Activated CD4-positive, alpha-beta T cell treated with anti-CD3 and anti-CD28 coated beads, Interleukin-2, amount 10 ng/mL, durations not matched to agents 24 days and 14 days (primary cell): ENCODE measurements at regions of chr1 and their contacts with region 1.

Region 1: GRCh38 chr1:112619520-112620376 is at the start of gene CAPZA1:
- DNase-seq: peak; percentile 97
- H3K4me3 Mint-ChIP-seq: peak within 1 kb of the TSS; percentile 99
- H3K27ac Mint-ChIP-seq: peak within 1 kb of the TSS; percentile 100
- H3K4me1 Mint-ChIP-seq: peaks cover 38% of the 10 kb centered on the region
- H3K27me3 Mint-ChIP-seq: no peaks in the 10 kb centered on the region
- total RNA-seq, gene CAPZA1: 241 and 250 TPM in 2 replicates

Region 2: DNA sequence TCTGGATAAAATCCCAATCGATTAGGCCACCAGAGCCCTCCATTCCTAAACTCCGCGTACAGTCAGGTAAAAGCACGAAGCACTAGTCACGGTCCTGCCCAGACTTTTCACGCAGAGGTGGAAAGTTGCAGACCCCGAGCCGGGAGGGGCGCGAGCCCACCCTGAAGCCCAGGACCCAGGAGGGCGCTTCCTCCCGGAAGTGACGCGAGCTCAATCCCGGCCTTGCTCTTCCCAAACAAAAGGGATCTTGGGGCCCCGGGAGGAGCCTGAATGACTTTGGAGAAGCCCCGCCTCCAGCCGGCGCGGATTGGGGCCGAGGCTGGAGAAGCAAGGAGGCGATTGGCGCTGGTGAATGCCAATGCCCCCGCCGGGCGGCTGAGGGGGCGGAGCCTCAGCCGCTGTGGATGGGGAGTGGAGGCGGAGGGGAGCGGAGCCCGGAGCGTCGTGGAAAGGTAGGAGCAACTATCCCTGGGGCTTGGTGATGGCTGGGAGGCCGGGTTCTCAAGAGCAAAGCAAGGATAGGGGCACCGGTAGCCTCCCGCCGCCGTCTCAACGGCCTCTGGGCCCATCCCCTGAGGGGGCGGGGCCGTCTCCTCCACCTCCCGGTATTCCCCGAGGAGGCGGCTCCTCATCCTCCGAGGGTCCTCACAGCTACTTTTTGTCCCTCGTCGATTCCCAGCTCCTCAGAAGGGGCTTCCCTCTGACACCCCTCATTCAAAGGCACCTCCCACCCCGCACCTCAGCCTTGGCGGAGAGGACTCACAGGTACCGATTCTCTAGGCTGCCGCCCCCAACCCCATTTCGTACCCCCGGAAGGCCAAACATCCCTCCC is 223.7 kb before region 1 on chr1 and contains the start of gene CTTNBP2NL:
- intact Hi-C with region 1: loop called (anchors 1 kb)
- DNase-seq: peak; percentile 95
- H3K4me3 Mint-ChIP-seq: peak within 1 kb of the TSS; percentile 89
- H3K27ac Mint-ChIP-seq: peak within 1 kb of the TSS; percentile 78
- H3K4me1 Mint-ChIP-seq: peaks cover 31% of the 10 kb centered on the region
- H3K27me3 Mint-ChIP-seq: peaks cover 10% of the 10 kb centered on the region
- total RNA-seq, gene CTTNBP2NL: 3.9 and 4.1 TPM in 2 replicates

Region 3: GRCh38 chr1:112651205-112651604 is 31.5 kb after region 1 on chr1:
- intact Hi-C with region 1: no loop called
- DNase-seq: no peak
- H3K4me3 Mint-ChIP-seq: no peak overlapping the region
- H3K27ac Mint-ChIP-seq: no peak overlapping the region
- H3K4me1 Mint-ChIP-seq: peaks cover 8% of the 10 kb centered on the region
- H3K27me3 Mint-ChIP-seq: no peaks in the 10 kb centered on the region

Region 4: DNA sequence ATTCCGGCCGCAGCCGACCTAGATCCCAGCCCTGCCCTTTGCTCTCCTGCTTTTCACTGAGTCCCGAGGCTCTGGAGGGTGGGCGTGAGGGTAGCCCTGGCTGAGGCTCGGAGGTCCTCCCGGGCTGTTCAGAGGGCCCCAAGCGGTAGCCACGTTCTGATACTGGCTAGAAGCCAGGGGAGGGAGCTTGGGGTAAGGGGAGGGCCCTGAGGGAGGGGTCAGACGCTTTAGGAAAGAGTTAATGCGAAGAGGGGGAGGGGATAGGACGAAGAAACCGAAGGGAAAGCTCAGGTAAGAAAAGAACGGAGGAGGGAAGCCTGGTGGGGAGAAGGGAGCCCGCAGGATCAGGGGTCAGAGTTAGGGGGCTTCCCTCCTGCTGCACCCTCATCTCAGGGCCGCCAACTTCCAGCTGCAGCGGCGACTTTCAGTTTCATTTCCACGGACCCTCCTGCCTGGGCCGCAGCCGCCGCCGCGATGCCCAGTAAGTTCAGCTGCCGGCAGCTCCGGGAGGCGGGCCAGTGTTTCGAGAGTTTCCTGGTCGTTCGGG is 54.8 kb after region 1 on chr1 and contains the start of gene MOV10:
- intact Hi-C with region 1: loop called (anchors 1 kb)
- DNase-seq: peak; percentile 91
- H3K4me3 Mint-ChIP-seq: peak within 1 kb of the TSS; percentile 97
- H3K27ac Mint-ChIP-seq: peak within 1 kb of the TSS; percentile 98
- H3K4me1 Mint-ChIP-seq: peaks cover 38% of the 10 kb centered on the region
- H3K27me3 Mint-ChIP-seq: no peaks in the 10 kb centered on the region
- total RNA-seq, gene MOV10: 70.7 and 76.7 TPM in 2 replicates

Region 5: GRCh38 chr1:112803906-112804762 is 184.4 kb after region 1 on chr1:
- intact Hi-C with region 1: loop called (anchors 5 kb)
- DNase-seq: peak; percentile 86
- H3K4me3 Mint-ChIP-seq: no peak overlapping the region
- H3K27ac Mint-ChIP-seq: no peak overlapping the region
- H3K4me1 Mint-ChIP-seq: peaks cover 2% of the 10 kb centered on the region
- H3K27me3 Mint-ChIP-seq: peaks cover 11% of the 10 kb centered on the region

Region 6: DNA sequence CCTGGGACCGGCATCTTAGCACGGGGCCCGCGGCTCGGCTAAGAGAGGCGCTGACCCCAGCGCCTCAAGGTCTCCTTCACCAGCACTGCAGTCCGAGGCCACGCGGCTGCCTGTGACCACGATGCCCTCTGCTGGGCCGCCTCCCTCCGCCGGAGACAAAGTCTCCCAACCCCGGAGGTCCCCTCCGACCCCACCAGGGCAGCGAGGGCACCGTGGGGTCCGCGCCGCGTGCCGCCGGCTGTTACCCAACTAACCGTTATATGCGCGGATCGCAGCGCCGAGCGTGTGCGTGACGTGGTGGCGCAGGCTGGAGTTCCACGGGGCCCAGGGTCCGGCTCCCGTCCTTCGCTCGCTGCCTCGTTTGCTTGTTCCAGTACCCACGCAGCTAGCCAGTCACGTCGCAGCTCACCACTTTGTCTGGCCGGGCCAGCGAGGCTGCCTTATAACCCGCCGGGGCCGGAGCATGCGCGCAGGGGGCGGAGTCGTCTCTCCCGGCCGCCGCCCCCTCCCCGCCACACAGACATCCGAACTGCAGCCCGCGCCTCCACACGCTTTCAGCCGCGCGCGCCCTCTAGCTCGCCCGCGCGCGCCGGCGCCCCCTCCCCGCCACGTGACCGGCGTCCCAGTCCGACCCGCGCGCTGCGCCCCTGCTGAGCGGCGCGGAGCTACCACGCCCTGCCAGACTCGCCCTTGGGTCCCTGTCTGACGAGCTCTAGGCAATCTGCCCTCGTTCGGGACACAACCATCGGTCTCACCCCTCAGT is 336.2 kb after region 1 on chr1 and contains the start of gene SLC16A1:
- intact Hi-C with region 1: loop called (anchors 2 kb)
- DNase-seq: peak; percentile 97
- H3K4me3 Mint-ChIP-seq: peak within 1 kb of the TSS; percentile 88
- H3K27ac Mint-ChIP-seq: peak within 1 kb of the TSS; percentile 100
- H3K4me1 Mint-ChIP-seq: peaks cover 51% of the 10 kb centered on the region
- H3K27me3 Mint-ChIP-seq: no peaks in the 10 kb centered on the region
- total RNA-seq, gene SLC16A1: 79.2 and 79.7 TPM in 2 replicates

Region 7: GRCh38 chr1:113389953-113390834 is 770.4 kb after region 1 on chr1 and contains the start of gene MAGI3:
- intact Hi-C with region 1: loop called (anchors 5 kb)
- DNase-seq: peak; percentile 99
- H3K4me3 Mint-ChIP-seq: peak within 1 kb of the TSS; percentile 90
- H3K27ac Mint-ChIP-seq: peak within 1 kb of the TSS; percentile 74
- H3K4me1 Mint-ChIP-seq: peaks cover 28% of the 10 kb centered on the region
- H3K27me3 Mint-ChIP-seq: peaks cover 46% of the 10 kb centered on the region
- total RNA-seq, gene MAGI3: 3.7 and 3.8 TPM in 2 replicates